Lower leg skin (tissue), 4 donors: ENCODE measurements at regions of chr1 and their contacts with region 1.

Region 1: GRCh38 chr1:191453500-191453899 is 704.8 kb upstream of the RGS18 start:
- DNase-seq: no peak
- H3K4me3 ChIP-seq: no peak overlapping the region
- CTCF ChIP-seq: no peak
- POLR2A ChIP-seq: no peak

Region 2: DNA sequence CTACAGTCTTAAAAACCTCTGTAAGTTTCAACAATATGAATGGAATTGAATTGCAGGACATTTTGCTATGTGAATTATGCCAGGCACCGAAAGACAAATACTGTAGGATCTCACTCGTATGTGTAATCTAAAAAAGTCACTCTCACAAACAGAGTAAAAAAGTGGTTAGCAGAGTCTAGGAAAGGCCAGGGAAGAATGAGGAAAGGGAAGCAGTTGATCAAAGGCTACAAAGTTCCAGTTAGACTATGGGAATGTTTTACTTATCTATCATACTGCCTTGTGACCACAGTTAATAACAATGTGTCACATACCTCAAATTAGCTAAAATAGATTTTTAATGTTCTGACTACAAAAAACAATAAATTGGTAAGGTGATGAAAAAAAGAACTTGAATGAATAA is 410.4 kb before region 1 on chr1:
- intact Hi-C with region 1: loop called (anchors 5 kb)
- DNase-seq: no peak
- H3K4me3 ChIP-seq: no peak overlapping the region
- CTCF ChIP-seq: no peak
- POLR2A ChIP-seq: no peak

Region 3: DNA sequence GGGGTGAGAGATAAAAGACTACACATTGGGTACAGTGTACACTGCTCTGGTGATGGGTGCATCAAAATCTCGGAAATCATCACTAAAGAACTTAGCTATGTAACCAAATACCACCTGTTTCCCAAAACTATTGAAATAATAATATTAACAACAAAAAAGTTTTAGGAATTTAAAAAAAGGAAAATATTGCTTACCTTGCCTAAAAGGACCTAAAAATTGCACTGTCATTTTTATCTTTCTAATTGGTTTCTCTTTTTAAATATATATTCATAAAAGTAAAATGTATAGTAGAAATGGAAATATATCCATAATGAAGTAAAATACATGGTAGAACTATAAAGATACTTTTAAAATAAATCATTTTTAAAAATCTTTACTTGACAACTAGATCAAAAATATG is 14.5 kb before region 1 on chr1:
- intact Hi-C with region 1: no loop called
- DNase-seq: no peak
- H3K4me3 ChIP-seq: no peak overlapping the region
- CTCF ChIP-seq: no peak
- POLR2A ChIP-seq: no peak

Region 4: DNA sequence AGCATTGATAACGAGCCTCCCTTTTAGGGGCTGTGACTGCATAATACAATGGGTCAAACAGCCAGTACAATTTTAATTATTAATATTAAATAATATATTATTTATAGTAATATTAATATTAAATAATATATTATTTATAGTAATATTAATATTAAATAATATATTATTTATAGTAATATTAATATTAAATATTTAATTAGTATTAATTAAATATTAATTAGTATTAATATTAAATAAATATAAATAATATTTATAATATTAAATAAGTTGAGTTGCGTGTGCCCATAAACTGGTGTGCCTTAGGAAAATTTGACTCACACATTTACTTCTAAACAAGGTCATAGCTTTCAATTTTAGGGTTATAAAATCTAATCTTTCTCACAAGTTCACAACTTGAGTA is 195.4 kb after region 1 on chr1:
- intact Hi-C with region 1: no loop called
- DNase-seq: no peak
- H3K4me3 ChIP-seq: no peak overlapping the region
- CTCF ChIP-seq: no peak
- POLR2A ChIP-seq: no peak

Region 5: DNA sequence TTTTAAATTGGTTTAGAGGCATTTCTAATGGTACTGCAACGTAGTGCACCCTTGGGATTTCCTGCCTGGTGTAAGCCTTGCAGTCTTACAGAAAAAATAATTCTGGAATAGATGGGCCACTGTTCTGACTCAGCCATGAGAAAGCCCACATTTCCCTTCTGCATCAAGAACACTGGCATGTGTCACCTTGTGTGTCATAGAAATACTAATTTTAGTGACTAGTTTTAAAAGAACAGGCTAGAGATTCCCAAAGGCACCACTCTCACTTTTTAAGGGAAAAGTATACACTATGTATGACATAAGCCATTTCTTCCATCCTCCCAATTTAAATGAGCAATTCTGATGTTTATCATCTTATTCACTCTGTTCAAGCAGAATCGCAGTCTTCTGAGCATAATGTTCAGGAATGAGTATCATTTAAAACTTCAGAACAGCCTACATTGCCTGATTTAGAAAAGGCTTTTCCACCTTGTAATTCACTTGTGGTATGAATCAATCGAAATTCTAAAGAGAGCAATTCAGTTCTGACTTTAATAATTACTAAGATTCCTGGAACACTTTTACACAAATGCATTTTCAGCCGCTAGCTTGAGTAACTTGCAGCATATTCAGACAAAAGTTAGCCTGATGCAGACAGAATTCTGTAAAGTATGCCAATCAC is 1201.2 kb after region 1 on chr1:
- intact Hi-C with region 1: loop called (anchors 5 kb)
- DNase-seq: no peak
- H3K4me3 ChIP-seq: no peak overlapping the region
- CTCF ChIP-seq: no peak
- POLR2A ChIP-seq: no peak